ENCODE measurements at regions of chr18 and their contacts with region 1.

Region 1: DNA sequence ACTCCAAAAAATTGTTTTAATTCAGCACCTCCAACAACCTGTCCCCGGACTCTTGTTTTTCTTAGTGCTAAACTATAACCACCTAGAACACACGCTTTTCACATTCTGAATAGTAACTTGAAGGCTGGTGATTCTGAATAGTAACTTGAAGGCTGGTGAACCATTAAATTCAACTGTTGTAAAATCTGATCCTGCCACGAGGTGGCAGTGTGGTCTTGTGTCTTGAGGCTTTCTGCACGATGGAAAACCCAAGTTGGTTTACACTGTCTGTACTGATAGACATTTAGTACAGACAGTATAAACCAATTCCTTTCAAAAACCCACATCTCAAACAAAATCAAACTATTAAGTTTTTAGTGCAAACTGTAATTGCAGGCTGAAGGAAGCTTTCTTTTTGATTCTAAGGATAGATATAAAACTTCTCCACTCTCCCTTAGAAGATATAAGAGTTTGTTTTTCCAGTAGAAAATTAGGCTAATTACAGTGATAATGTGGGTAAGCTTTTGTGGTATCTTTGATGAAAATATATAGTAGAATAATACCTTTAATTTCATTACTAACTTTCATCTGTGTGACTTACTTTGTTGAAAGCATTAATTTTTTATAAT is 57.6 kb downstream of the VAPA start:
- DNase-seq: peak; percentile 75
- H3K4me3 ChIP-seq: no peak overlapping the region
- H3K27ac ChIP-seq: no peak overlapping the region
- H3K4me1 ChIP-seq: no peaks in the 10 kb centered on the region
- H3K27me3 ChIP-seq: no peaks in the 10 kb centered on the region

Region 2: GRCh38 chr18:10032331-10033015 is 61.1 kb after region 1 on chr18:
- in situ Hi-C with region 1: loop called (anchors 10 kb)
- DNase-seq: no peak
- H3K4me3 ChIP-seq: no peak overlapping the region
- H3K27ac ChIP-seq: no peak overlapping the region
- H3K4me1 ChIP-seq: no peaks in the 10 kb centered on the region
- H3K27me3 ChIP-seq: no peaks in the 10 kb centered on the region

Measured in GM23248 (cell line).